ENCODE measurements at regions of chr1 and their contacts with region 1.

Region 1: GRCh38 chr1:6245086-6245868 is 1.3 kb downstream of the HES3 start:
- DNase-seq: peak; percentile 96
- H3K4me3 Mint-ChIP-seq: no peak overlapping the region
- H3K27ac Mint-ChIP-seq: no peak overlapping the region
- H3K4me1 Mint-ChIP-seq: peaks cover 21% of the 10 kb centered on the region
- H3K27me3 Mint-ChIP-seq: peaks cover 60% of the 10 kb centered on the region

Region 2: DNA sequence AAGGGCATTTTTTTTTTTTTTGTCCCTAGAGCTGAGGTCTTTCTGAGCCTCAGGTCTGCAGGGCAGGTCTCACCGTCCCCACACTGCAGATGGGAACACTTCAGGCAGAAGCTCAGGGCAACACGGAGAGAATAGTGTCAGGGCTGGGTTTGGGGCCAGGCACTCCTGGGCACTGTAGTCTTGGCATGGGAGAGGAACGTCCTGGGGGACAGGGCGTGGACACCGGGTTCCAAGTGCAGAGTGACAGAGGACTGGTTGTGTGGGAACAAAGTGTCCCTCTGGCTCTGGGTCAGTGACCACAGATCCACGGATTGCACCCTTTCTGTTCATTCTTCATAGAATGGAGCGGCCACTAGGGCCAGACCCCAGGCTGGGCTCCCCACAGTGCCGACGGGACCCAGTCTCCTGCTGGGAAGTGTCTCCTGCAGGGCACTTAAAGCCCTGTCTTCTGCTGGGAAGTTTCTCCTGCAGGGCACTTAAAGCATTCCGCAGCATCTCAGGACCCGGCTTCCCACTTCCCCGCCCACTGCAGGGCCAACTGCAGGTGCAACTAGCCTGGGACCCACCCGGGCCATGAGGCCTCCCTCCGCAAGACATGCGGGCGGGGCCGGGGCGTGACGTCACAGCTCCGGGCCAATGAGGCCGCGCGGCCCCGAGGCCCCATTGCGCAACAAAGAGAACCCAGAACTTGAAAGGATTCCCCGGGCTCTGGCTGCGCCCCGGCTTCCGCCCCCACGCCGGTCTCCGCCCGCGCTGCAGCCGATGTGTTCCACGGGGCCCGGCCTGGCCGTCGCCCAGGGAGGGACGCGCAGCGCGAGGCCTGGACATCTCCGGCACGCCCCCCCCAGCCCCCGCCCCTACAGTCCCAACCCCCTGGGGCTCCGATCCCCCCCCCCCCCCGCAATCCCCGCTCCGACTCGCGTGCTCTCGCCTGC is 14.5 kb after region 1 on chr1:
- intact Hi-C with region 1: loop called (anchors 2 kb)
- DNase-seq: peak; percentile 96
- H3K4me3 Mint-ChIP-seq: peak overlapping the region; percentile 63
- H3K27ac Mint-ChIP-seq: no peak overlapping the region
- H3K4me1 Mint-ChIP-seq: peaks cover 4% of the 10 kb centered on the region
- H3K27me3 Mint-ChIP-seq: peaks cover 18% of the 10 kb centered on the region

Region 3: GRCh38 chr1:6275826-6276782 is 30.8 kb after region 1 on chr1:
- intact Hi-C with region 1: no loop called
- DNase-seq: no peak
- H3K4me3 Mint-ChIP-seq: no peak overlapping the region
- H3K27ac Mint-ChIP-seq: no peak overlapping the region
- H3K4me1 Mint-ChIP-seq: no peaks in the 10 kb centered on the region
- H3K27me3 Mint-ChIP-seq: no peaks in the 10 kb centered on the region

Region 4: DNA sequence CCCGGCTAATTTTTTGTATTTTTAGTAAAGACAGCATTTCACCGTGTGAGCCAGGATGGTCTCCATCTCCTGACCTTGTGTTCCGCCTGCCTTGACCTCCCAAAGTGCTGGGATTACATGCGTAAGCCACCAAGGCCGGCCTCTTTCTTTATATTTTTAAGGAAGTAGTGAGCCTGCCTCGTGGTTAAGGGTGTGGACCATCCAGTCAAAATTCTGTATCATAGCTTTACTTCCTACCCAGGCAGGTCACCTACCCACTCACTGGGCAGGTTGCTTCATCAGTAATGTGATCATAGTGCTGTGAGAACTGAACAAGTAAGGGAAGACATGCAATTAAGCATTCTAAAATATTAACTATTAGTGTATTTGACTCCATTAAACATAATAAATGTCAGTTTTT is 156.4 kb after region 1 on chr1:
- intact Hi-C with region 1: loop called (anchors 1 kb)
- DNase-seq: no peak
- H3K4me3 Mint-ChIP-seq: no peak overlapping the region
- H3K27ac Mint-ChIP-seq: no peak overlapping the region
- H3K4me1 Mint-ChIP-seq: peaks cover 11% of the 10 kb centered on the region
- H3K27me3 Mint-ChIP-seq: peaks cover 16% of the 10 kb centered on the region

Region 5: DNA sequence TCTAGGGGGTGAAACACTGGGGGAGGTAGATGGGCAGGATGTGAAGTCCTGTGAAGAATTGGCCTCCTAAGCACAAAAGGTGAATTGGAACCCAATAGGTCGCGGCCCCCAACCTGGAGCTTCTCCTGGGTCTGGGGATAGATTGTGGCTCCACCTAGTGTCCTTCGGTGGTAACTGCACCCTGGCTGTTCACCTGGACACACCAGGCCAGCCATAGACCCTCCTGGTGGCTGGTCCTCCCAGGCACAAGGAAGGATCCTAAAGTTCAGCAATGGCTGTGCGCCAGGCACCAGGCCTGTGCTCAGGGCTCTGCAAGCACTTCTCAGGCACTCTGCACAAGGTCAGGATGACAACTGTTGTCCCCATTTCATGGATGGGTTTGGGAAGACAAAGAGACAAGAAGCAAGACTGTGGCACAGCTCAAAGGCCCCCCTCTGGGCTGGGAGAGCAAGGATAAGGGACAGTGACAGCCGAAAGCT is 192.8 kb after region 1 on chr1:
- intact Hi-C with region 1: loop called (anchors 1 kb)
- DNase-seq: peak; percentile 93
- H3K4me3 Mint-ChIP-seq: no peak overlapping the region
- H3K27ac Mint-ChIP-seq: peak overlapping the region; percentile 58
- H3K4me1 Mint-ChIP-seq: peaks cover 10% of the 10 kb centered on the region
- H3K27me3 Mint-ChIP-seq: peaks cover 34% of the 10 kb centered on the region